ENCODE measurements at regions of chr4 and their contacts with region 1.

Region 1: DNA sequence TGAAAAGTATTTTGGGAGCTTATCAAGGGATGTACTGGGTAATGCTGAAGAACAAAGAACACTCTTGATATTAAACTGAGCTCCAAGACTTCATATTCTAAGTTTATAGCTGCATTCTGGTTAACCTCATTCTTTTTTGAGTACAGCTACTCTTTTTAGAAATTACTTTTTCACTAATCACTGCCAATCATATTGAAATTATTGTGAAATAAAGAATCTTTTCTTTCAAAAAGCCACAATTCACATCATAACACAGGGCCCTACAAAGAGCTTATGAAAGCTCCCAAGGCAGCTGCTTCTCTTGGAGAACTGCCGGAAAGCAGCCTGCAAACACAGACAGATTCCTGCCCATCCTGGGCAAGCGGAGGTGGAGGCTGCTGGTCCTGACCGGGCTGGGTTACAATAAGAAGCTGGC is 121.4 kb downstream of the RNF150 start:
- DNase-seq: no peak
- H3K4me3 ChIP-seq: no peak overlapping the region
- H3K27ac ChIP-seq: no peak overlapping the region
- H3K4me1 ChIP-seq: peaks cover 0 to under 1% of the 10 kb centered on the region in 2 donors
- H3K27me3 ChIP-seq: no peaks in the 10 kb centered on the region
- CTCF ChIP-seq: no peak
- POLR2A ChIP-seq: no peak

Region 2: DNA sequence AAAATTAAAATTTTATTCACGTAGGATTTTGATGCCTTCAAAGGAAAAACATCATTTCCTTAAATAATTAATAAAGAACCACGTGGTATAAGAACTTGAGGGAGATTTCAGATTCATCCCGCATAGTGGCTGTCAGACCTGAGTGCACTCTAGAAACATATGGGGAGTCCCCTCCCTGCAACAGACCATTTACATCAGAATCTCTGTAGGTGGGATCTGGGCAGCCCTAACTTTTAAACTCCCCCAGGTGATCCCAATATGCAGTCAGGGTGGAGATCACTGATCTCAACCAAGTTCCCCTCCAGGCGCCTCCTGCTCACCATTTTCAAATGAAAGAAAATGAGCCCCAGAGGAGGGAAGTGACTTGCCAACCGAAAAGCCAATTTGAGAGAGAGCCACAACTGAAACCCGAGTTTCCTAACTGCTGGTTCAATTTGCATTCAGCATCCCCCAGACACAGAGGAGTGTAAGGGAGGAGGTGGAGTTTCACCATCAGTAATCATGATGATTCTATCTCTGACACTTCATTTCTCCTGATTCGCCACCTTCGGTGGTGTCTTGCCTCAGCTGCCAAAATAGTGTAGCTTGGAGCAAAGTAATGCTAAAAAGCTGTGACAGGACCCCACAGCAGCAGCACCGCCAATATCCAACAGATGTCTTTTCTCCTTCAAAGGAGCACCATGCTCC is 110.0 kb after region 1 on chr4:
- intact Hi-C with region 1: loop called in 1 of 2 experiments (anchors 10 kb)
- DNase-seq: no peak
- H3K4me3 ChIP-seq: no peak overlapping the region
- H3K27ac ChIP-seq: no peak overlapping the region
- H3K4me1 ChIP-seq: peaks cover 0 to 14% of the 10 kb centered on the region in 2 donors
- H3K27me3 ChIP-seq: no peaks in the 10 kb centered on the region
- CTCF ChIP-seq: no peak
- POLR2A ChIP-seq: no peak

Region 3: DNA sequence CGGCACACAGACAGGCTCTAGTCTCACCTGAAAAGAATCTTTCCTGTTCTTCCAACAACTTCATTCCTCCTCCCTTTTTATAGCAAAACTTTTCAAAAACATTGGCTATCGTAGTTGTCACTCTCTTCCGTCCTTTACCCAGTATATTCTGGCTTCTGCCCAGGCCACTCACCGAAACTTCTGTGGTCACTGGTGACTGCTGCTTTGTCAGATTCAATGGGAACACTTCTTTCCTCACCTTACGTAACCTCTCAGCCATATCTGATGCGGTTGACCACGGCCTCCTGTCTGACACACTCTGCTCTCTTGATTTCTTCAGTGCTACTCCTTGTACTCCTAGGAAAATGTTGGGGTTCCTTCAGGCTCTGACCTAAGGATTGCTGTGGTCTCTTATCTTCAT is 130.5 kb after region 1 on chr4:
- intact Hi-C with region 1: no loop called
- DNase-seq: no peak
- H3K4me3 ChIP-seq: no peak overlapping the region
- H3K27ac ChIP-seq: no peak overlapping the region
- H3K4me1 ChIP-seq: no peaks in the 10 kb centered on the region
- H3K27me3 ChIP-seq: no peaks in the 10 kb centered on the region
- CTCF ChIP-seq: no peak
- POLR2A ChIP-seq: no peak

Measured in adrenal gland (tissue), 19 donors.